Right ventricle myocardium inferior (tissue), 1 donor: ENCODE measurements at regions of chr13 and their contacts with region 1.

Region 1: GRCh38 chr13:51148952-51149573 is 38.0 kb upstream of the C13orf42 start:
- DNase-seq: no peak
- ATAC-seq: peak; percentile 67

Region 2: DNA sequence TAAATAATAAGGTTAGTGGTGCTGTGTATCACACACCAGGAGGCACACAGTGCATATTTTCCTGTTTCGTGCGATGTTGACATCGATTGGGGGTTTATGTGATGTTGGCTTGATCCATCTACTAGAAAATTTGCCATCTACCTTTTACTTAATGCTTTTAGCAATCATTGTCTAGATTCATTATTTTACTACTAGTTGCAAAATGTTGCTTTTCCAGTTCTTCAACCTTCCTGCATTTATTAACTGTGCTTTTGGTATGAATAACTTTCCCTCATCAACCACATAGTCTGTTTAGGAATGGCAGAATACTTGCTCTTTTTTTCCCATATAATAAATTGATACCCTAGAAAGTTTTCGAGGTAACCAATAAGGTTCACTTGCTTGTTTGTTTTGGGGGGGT is 55.5 kb before region 1 on chr13:
- intact Hi-C with region 1: no loop called
- DNase-seq: no peak
- ATAC-seq: no peak

Region 3: DNA sequence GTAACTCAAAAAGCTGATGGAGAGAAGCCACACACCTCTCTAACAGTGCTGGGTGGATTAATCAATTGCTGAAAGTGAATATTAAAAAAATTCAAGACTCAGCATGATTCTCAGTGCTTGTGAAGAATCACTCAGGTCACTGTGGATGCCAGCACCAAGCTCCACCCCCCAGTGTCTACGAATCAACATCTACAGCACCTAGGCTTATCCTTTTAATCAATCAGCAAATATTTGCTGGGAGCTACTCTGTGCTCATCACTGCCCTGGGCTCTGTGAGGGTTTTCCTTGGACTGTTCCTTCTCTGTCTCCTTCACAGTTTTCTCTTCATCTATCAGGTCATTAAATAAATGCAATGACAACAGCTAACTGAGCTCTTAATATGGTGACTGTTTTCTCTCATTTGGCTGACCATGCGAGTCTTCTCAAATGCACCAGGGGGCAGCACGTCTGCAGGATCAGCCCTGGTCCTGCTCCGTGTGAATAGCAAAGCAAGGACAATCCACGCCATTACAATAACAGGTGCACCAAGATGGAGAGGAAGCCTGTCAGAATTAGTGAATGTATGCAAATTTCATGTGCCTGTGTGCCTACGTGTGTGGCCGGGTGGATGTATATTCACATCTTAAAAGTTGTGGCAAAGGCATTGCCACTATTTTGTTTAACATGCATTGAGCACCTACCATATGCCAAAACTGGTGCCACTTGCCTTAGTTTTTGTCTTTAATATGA is 23.4 kb before region 1 on chr13:
- intact Hi-C with region 1: no loop called
- DNase-seq: no peak
- ATAC-seq: peak; percentile 59

Region 4: DNA sequence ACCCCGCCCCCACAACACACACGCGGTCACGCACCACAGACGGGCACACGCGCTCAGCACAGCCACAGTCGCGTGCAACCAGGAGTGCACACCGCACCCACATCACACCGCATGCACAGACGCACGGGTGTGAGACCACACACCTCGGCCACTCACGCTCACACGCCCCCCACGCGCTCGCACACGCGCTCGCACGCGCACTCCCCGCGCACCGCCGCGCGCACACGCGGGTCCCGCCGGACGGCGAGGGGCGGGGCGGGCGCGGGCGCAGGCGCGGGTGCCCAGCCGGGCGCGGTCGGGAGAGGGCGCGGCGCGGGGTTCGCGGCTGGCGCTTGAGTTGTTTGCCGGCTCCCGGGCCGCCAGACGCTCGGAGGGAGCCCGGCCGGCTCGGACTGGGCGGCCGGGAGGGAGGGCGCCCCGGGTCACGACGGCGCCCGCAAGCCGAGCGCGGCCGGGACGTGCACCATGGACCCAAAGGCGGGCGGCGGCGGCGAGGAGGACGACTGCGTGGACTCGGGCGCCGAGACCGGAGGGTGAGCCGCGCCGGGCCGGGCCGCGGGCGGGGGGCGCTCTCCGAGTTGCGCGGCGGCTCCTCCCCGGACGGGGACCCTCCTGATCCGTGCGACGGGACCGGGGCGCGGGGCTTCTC is 73.1 kb after region 1 on chr13 and contains the start of gene FAM124A:
- intact Hi-C with region 1: loop called (anchors 5 kb)
- DNase-seq: peak; percentile 78
- ATAC-seq: peak; percentile 83
- total RNA-seq, gene FAM124A: 12.1 TPM